ENCODE measurements at regions of chr22 and their contacts with region 1.

Region 1: DNA sequence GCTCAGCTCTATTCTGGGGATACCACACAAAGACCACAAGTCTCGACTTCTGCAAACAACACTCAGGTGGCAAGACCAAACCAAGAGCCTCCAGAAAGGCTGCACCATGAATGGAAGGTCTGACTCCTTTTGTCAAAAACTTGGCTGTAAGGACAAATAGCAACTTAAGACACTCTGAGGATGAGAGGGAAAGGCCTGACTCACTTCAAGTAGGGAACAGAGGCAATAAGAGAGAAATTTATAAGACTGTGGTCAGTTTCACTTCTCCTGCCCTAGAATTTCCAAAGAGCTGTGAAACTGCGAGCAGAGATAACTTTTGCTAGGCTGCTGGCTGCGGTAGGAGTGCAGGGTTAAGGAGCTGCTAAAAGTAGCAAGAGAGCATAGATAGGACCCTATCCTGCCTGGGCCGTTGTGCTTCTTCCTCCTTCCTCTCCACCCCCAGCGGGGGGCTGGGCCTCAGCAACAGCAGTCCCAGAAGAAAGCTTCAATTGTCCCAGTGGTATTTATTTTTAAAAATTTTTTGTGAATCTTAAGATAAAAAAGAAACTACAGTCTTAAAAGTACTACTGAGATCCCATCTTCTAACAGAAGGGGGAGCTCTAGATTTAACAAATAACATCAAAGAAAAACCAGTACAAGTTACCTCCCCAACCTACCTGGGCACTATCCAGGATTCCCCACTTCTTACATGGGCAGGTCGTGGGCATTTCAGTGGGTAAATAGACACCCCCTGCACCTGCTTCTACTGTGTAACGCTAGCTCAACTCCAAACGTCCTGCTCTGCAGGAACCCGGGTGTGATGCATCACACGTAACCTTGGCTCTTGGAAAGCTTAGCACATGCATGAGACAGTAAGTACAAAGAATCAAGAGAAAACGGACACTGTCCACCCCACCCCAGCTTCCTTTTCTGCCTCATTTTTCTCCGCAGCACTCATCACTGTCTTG is 66.4 kb downstream of the SGSM3 start:
- DNase-seq: no peak
- H3K4me3 Mint-ChIP-seq: no peak overlapping the region
- H3K27ac Mint-ChIP-seq: peak overlapping the region; percentile 54
- H3K4me1 Mint-ChIP-seq: peaks cover 49% of the 10 kb centered on the region
- H3K27me3 Mint-ChIP-seq: no peaks in the 10 kb centered on the region

Region 2: DNA sequence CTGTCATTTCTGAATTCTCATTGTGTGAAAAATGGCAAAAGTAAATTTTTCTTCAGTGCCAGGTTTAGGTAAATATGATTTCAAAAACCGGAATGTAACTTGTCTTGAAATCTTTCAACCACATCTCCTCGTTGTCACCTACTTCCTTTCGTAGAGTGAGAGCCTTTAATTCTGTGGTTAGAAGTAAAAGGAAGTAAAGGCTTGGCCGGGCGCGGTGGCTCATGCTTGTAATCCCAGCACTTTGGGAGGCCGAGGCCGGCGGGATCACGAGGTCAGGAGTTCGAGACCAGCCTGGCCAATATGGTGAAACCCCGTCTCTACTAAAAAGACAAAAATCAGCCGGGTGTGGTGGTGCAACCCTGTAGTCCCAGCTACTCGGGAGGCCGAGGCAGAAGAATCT is 36.6 kb before region 1 on chr22:
- CTCF ChIA-PET with region 1: interaction called, 5 read pairs
- POLR2A ChIA-PET with region 1: no interaction called
- intact Hi-C with region 1: loop called (anchors 5 kb)
- DNase-seq: peak; percentile 75
- H3K4me3 Mint-ChIP-seq: no peak overlapping the region
- H3K27ac Mint-ChIP-seq: peak overlapping the region; percentile 70
- H3K4me1 Mint-ChIP-seq: peaks cover 61% of the 10 kb centered on the region
- H3K27me3 Mint-ChIP-seq: no peaks in the 10 kb centered on the region

Region 3: DNA sequence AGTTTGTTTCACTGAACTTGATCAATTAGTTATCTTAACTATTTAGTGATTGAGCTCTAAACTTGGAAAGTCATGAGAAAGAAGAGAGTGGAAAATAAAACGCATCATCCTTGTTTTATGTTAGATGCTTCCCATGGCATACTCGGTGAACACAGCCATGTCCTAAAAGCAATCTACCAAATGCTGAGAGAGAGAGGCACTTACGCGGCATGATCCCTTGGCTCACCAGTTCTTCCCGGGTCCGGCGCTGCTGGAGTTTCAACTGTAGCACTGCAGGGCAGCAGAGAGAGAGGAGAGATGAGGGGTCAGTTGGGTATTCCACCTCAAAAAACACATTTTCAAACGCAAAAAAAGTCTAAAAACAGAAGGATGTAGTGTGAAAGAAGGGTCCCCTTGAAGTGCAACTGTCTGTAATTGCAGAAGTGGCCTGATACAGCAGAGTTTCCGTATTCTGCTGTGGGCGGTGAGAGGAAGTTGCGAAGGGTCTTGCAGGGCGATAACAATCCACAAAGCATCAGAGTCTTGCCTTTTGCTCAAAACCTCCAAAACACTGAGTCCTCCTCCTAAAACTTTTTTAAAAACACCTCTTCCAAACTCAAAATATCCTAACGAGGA is 26.3 kb after region 1 on chr22:
- CTCF ChIA-PET with region 1: interaction called, 10 read pairs
- POLR2A ChIA-PET with region 1: interaction called, 3 read pairs
- intact Hi-C with region 1: no loop called
- DNase-seq: peak; percentile 69
- H3K4me3 Mint-ChIP-seq: peak overlapping the region; percentile 94
- H3K27ac Mint-ChIP-seq: peak overlapping the region; percentile 95
- H3K4me1 Mint-ChIP-seq: peaks cover 66% of the 10 kb centered on the region
- H3K27me3 Mint-ChIP-seq: no peaks in the 10 kb centered on the region

Region 4: DNA sequence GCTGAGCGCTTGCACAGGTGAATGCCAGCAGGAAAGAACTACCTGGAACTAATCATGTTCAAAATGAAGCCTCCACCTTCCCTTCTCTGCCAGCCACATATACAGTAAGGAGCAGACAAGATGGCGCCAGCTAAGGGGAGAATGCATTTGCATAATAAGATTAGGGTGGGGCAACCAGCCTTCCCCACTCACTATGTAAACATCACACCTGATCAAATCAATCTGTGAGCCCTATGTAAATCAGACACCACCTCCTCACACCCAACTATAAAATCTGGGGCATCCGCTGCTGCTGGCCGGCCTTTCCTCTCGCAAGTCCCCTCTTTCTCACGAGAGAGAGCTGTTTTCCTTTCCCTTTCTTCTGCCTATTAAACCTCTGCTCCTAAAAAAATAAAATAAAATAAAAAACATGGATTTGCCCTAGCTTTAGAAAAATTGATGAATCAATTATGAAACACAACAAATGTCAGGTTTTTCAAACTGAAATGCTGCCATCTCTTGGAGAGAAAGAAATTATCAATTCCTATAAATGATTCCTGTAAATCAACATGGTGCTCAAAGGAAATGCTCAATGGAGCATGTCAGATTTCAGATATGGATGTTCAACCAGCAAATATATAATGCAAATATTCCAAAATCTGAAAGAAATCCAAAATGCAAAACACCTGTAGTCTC is 42.5 kb after region 1 on chr22:
- CTCF ChIA-PET with region 1: interaction called, 102 read pairs
- POLR2A ChIA-PET with region 1: interaction called, 5 read pairs
- intact Hi-C with region 1: loop called (anchors 2 kb)
- DNase-seq: no peak
- H3K4me3 Mint-ChIP-seq: no peak overlapping the region
- H3K27ac Mint-ChIP-seq: no peak overlapping the region
- H3K4me1 Mint-ChIP-seq: peaks cover 21% of the 10 kb centered on the region
- H3K27me3 Mint-ChIP-seq: no peaks in the 10 kb centered on the region

Region 5: GRCh38 chr22:40533712-40534378 is 97.1 kb after region 1 on chr22:
- CTCF ChIA-PET with region 1: interaction called, 11 read pairs
- POLR2A ChIA-PET with region 1: no interaction called
- intact Hi-C with region 1: no loop called
- DNase-seq: peak; percentile 65
- H3K4me3 Mint-ChIP-seq: peak overlapping the region; percentile 78
- H3K27ac Mint-ChIP-seq: peak overlapping the region; percentile 83
- H3K4me1 Mint-ChIP-seq: peaks cover 64% of the 10 kb centered on the region
- H3K27me3 Mint-ChIP-seq: no peaks in the 10 kb centered on the region

Region 6: GRCh38 chr22:40651563-40652501 is 215.1 kb after region 1 on chr22:
- CTCF ChIA-PET with region 1: interaction called, 188 read pairs
- POLR2A ChIA-PET with region 1: no interaction called
- intact Hi-C with region 1: no loop called
- DNase-seq: peak; percentile 97
- H3K4me3 Mint-ChIP-seq: peak overlapping the region; percentile 70
- H3K27ac Mint-ChIP-seq: peak overlapping the region; percentile 91
- H3K4me1 Mint-ChIP-seq: peaks cover 24% of the 10 kb centered on the region
- H3K27me3 Mint-ChIP-seq: no peaks in the 10 kb centered on the region